ENCODE measurements at regions of chr17 and their contacts with region 1.

Region 1: DNA sequence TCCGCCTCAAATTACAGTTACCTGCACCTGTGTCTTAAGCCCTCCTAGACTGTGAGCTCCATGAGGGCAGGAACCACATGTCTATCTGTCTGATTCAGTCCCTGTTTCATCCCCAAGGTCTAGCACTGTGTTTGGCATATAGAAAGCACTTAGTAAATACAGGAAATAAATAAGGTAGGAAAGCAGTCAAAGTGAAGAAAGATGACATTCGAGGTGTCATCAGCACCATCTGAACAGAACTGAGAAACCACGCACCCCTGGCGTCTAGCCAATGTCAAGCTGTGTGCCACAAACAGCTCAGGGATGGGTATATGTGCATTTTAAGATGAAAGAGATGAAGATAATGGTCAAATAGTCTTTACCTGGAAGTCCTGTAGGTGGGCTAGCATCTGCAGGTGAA is 79.6 kb upstream of the ATP2A3 start:
- DNase-seq: peak; percentile 60 to 75 (median 63)
- H3K4me3 ChIP-seq: no peak overlapping the region
- H3K4me3 Mint-ChIP-seq: peak overlapping the region in 6 of 8 donors; percentile 2 to 71 (median 36)
- H3K27ac ChIP-seq: peak overlapping the region; percentile 2
- H3K27ac Mint-ChIP-seq: peak overlapping the region; percentile 73 to 93 (median 88)
- H3K4me1 ChIP-seq: peaks cover 42% of the 10 kb centered on the region
- H3K4me1 Mint-ChIP-seq: peaks cover 21 to 41% (median 31%) of the 10 kb centered on the region in 4 donors
- H3K27me3 ChIP-seq: no peaks in the 10 kb centered on the region
- H3K27me3 Mint-ChIP-seq: no peaks in the 10 kb centered on the region

Region 2: GRCh38 chr17:4100883-4101756 is 57.3 kb after region 1 on chr17:
- CTCF ChIA-PET with region 1: no interaction called
- POLR2A ChIA-PET with region 1: no interaction called
- intact Hi-C with region 1: loop called (anchors 10 kb)
- DNase-seq: peak; percentile 30 to 62 (median 43)
- H3K4me3 ChIP-seq: no peak overlapping the region
- H3K4me3 Mint-ChIP-seq: peak overlapping the region in 4 of 8 donors; percentile 7 to 62 (median 56)
- H3K27ac ChIP-seq: peak overlapping the region; percentile 60
- H3K27ac Mint-ChIP-seq: peak overlapping the region; percentile 84 to 97 (median 92)
- H3K4me1 ChIP-seq: peaks cover 17% of the 10 kb centered on the region
- H3K4me1 Mint-ChIP-seq: peaks cover 14 to 33% (median 21%) of the 10 kb centered on the region in 4 donors
- H3K27me3 ChIP-seq: no peaks in the 10 kb centered on the region
- H3K27me3 Mint-ChIP-seq: no peaks in the 10 kb centered on the region